Mammary epithelial cell (primary cell): ENCODE measurements at regions of chr2 and their contacts with region 1.

Region 1: GRCh38 chr2:240434728-240435456 is 571 bp upstream of the GPC1 start:
- DNase-seq: peak; percentile 91
- H3K4me3 ChIP-seq: peak overlapping the region; percentile 65 to 84 (median 70)
- H3K27ac ChIP-seq: peak overlapping the region; percentile 83
- H3K4me1 ChIP-seq: peaks cover 48% of the 10 kb centered on the region
- H3K27me3 ChIP-seq: no peaks in the 10 kb centered on the region
- CTCF ChIP-seq: no peak

Region 2: GRCh38 chr2:240149943-240150784 is 284.7 kb before region 1 on chr2:
- CTCF ChIA-PET with region 1: no interaction called
- dilution Hi-C with region 1: no loop called
- in situ Hi-C with region 1: loop called in 1 of 2 experiments (anchors 5 kb)
- intact Hi-C with region 1: loop called (anchors 1 kb)
- DNase-seq: no peak
- H3K4me3 ChIP-seq: no peak overlapping the region
- H3K27ac ChIP-seq: no peak overlapping the region
- H3K4me1 ChIP-seq: no peaks in the 10 kb centered on the region
- H3K27me3 ChIP-seq: peaks cover 3% of the 10 kb centered on the region
- CTCF ChIP-seq: peak; percentile 80 to 94

Region 3: GRCh38 chr2:240250985-240251847 is 183.7 kb before region 1 on chr2:
- CTCF ChIA-PET with region 1: interaction called, 3 read pairs
- dilution Hi-C with region 1: no loop called
- in situ Hi-C with region 1: no loop called
- intact Hi-C with region 1: loop called (anchors 1 kb)
- DNase-seq: peak; percentile 83
- H3K4me3 ChIP-seq: peak overlapping the region in 2 of 3 experiments; percentile 21 to 33
- H3K27ac ChIP-seq: peak overlapping the region; percentile 30
- H3K4me1 ChIP-seq: peaks cover 35% of the 10 kb centered on the region
- H3K27me3 ChIP-seq: no peaks in the 10 kb centered on the region
- CTCF ChIP-seq: no peak

Region 4: DNA sequence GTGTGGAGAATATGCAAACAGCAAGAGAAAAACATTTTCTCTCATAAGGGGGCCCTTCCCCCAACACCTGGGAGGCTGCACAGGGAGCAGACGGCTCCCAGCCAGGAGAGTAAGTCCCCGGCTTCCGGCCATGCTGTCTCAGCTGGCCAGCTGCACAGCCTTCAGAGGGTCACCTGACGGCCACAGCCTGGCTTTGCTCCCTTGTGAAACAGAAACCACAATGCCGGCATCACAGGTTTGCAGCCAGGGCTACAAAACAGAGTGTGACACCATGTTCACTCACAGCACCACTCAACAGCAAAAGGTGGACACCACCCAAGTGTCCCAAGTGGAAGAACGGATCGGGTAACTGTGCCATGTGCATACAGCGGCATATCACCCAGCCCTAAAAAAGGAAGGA is 86.4 kb before region 1 on chr2:
- CTCF ChIA-PET with region 1: no interaction called
- dilution Hi-C with region 1: no loop called
- in situ Hi-C with region 1: no loop called
- intact Hi-C with region 1: loop called (anchors 1 kb)
- DNase-seq: peak; percentile 24
- H3K4me3 ChIP-seq: no peak overlapping the region
- H3K27ac ChIP-seq: no peak overlapping the region
- H3K4me1 ChIP-seq: no peaks in the 10 kb centered on the region
- H3K27me3 ChIP-seq: no peaks in the 10 kb centered on the region
- CTCF ChIP-seq: no peak

Region 5: DNA sequence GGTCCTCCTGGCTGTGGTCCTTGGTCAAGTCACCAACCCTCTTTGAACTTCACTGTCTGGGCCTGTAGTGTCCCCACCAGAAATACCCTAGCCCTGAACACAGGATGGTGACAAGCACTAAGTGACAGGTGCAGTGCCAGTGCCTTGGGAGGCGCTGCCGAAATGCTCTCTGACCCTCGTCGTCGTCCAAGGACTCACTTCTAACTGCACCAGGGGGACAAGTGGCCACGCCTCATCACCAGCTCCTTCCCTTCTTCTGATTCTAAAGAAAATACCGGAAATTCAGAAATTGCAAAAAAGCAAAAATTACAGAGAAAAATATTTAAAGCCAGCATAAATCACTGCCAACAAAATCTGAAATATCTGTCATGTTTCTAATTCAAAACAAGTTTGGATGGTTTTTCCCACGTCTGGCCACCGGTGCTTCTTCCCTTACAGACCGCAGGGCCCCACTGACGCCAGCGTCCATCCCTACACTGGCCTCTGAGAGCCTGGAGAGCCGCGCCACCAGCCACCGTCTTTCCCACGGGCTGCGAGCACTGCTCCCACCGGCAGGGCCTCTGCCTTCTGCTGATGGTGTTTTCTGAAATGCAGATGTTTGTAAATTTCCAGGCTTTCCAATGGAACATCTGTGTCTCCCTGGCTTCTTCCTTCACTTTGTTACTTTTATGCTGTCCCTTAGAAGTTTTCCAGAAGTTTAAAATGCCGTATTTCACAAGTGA is 36.8 kb before region 1 on chr2:
- CTCF ChIA-PET with region 1: no interaction called
- dilution Hi-C with region 1: no loop called
- in situ Hi-C with region 1: no loop called
- intact Hi-C with region 1: loop called (anchors 5 kb)
- DNase-seq: no peak
- H3K4me3 ChIP-seq: no peak overlapping the region
- H3K27ac ChIP-seq: no peak overlapping the region
- H3K4me1 ChIP-seq: peaks cover 5% of the 10 kb centered on the region
- H3K27me3 ChIP-seq: no peaks in the 10 kb centered on the region
- CTCF ChIP-seq: no peak

Region 6: GRCh38 chr2:240560480-240561326 is 125.8 kb after region 1 on chr2:
- CTCF ChIA-PET with region 1: no interaction called
- dilution Hi-C with region 1: no loop called
- in situ Hi-C with region 1: no loop called
- intact Hi-C with region 1: loop called (anchors 10 kb)
- DNase-seq: peak; percentile 97
- H3K4me3 ChIP-seq: peak overlapping the region; percentile 64 to 78 (median 69)
- H3K27ac ChIP-seq: peak overlapping the region; percentile 73
- H3K4me1 ChIP-seq: peaks cover 39% of the 10 kb centered on the region
- H3K27me3 ChIP-seq: no peaks in the 10 kb centered on the region
- CTCF ChIP-seq: peak; percentile 9 to 23